Caco-2 (cell line): ENCODE measurements at regions of chr11 and their contacts with region 1.

Region 1: DNA sequence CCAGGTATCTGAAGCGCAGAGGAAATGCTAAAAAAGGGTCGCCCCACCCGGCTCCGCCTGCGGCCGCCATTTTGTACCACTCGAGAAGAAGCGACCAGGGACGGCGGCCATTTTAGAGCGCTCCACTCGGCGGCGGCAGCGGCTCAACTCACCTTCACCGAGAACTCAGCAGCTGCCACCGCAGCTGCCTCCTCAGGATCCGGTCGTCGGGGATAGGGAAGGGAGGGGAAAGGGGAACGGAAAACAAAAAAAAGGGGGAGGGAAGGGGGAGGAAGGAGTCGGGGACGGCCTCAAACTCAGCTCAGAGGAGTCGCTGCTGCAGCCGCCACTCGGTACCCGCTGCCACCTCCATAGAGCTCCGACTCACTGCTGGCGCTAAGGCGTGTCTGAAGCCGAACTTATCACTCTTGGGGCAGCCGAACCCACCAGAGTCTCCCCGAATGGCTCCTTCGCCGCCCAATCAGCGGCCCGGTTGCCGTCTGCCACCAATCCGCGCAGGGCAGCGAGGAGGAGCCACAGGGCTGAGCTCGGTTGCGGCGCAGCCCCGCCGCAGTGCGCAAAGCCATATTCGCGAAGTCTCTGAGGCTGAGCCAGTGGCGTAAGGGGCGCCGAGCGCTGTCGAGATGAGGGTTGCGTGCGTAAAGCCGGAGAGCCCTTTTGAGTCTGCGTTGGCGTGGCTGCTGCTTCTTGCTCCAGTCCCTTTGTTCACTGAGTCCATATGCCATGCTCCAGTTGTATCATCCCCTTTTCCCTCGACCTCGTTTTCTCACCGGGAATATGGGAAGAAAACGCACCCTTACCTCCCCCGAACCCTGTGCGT is at the start of gene EIF4G2:
- DNase-seq: peak; percentile 98 to 99
- H3K4me3 ChIP-seq: peak within 1 kb of the TSS; percentile 92
- H3K4me3 Mint-ChIP-seq: peak within 1 kb of the TSS; percentile 98
- H3K27ac Mint-ChIP-seq: peak within 1 kb of the TSS; percentile 97
- H3K4me1 ChIP-seq: peaks cover 11% of the 10 kb centered on the region
- H3K4me1 Mint-ChIP-seq: peaks cover 11% of the 10 kb centered on the region
- H3K27me3 ChIP-seq: no peaks in the 10 kb centered on the region
- H3K27me3 Mint-ChIP-seq: no peaks in the 10 kb centered on the region
- CTCF ChIP-seq: no peak
- total RNA-seq, gene EIF4G2: 1,233 and 1,287 TPM in 2 replicates

Region 2: GRCh38 chr11:10792398-10792975 is 16.3 kb before region 1 on chr11:
- CTCF ChIA-PET with region 1: interaction called, 28 read pairs
- POLR2A ChIA-PET with region 1: interaction called, 49 read pairs
- intact Hi-C with region 1: no loop called
- DNase-seq: peak; percentile 93 to 96
- H3K4me3 ChIP-seq: no peak overlapping the region
- H3K4me3 Mint-ChIP-seq: peak overlapping the region; percentile 10
- H3K27ac Mint-ChIP-seq: no peak overlapping the region
- H3K4me1 ChIP-seq: no peaks in the 10 kb centered on the region
- H3K4me1 Mint-ChIP-seq: peaks cover 6% of the 10 kb centered on the region
- H3K27me3 ChIP-seq: no peaks in the 10 kb centered on the region
- H3K27me3 Mint-ChIP-seq: no peaks in the 10 kb centered on the region
- CTCF ChIP-seq: peak; percentile 94 to 99

Region 3: GRCh38 chr11:10838083-10838482 is 29.3 kb after region 1 on chr11:
- CTCF ChIA-PET with region 1: interaction called, 7 read pairs
- POLR2A ChIA-PET with region 1: interaction called, 32 read pairs
- intact Hi-C with region 1: loop called (anchors 1 kb)
- DNase-seq: no peak
- H3K4me3 ChIP-seq: no peak overlapping the region
- H3K4me3 Mint-ChIP-seq: no peak overlapping the region
- H3K27ac Mint-ChIP-seq: no peak overlapping the region
- H3K4me1 ChIP-seq: peaks cover 20% of the 10 kb centered on the region
- H3K4me1 Mint-ChIP-seq: peaks cover 11% of the 10 kb centered on the region
- H3K27me3 ChIP-seq: no peaks in the 10 kb centered on the region
- H3K27me3 Mint-ChIP-seq: no peaks in the 10 kb centered on the region
- CTCF ChIP-seq: no peak

Region 4: GRCh38 chr11:10893714-10894151 is 85.0 kb after region 1 on chr11:
- CTCF ChIA-PET with region 1: interaction called, 11 read pairs
- POLR2A ChIA-PET with region 1: interaction called, 35 read pairs
- intact Hi-C with region 1: loop called (anchors 2 kb)
- DNase-seq: peak; percentile 63 to 78
- H3K4me3 ChIP-seq: no peak overlapping the region
- H3K4me3 Mint-ChIP-seq: no peak overlapping the region
- H3K27ac Mint-ChIP-seq: peak overlapping the region; percentile 77
- H3K4me1 ChIP-seq: peaks cover 32% of the 10 kb centered on the region
- H3K4me1 Mint-ChIP-seq: peaks cover 32% of the 10 kb centered on the region
- H3K27me3 ChIP-seq: no peaks in the 10 kb centered on the region
- H3K27me3 Mint-ChIP-seq: no peaks in the 10 kb centered on the region
- CTCF ChIP-seq: peak; percentile 21 to 52

Region 5: DNA sequence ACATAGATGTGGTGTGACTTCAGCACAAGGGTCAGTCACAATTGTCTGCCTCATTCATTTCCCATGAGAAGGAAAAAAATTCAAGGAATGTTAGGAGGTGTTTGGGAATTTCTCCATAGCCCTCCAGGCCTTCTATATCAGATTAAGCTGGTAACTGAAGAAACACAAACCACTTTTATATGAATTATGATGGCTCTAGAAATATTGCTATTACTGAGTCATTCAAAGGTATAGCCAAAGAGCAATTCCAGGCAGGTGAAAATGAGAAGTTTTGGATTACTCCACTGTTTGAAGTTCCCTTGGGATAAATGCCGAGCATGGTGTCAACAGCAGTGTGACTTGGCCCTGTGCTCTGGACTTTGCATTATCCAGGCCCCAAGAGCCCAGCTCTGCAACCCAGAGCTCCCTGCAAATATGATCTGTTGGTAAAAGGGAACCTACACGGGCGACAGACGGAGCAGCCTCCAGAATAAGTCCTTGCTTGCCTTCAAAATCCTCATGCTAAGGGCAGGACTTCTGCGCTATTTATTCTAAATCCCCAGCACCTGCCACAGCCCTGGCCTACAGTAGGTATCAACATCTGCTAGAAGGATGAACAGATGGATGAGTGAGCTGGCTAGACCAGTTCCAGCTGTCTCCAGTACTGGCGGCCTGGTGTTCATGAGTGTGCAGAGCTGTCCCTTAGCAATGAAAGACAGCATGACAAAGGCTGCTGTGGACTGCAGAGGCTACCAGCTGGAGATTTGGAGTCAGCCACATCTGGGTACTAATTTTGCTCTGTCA is 116.6 kb after region 1 on chr11:
- CTCF ChIA-PET with region 1: interaction called, 3 read pairs
- POLR2A ChIA-PET with region 1: interaction called, 39 read pairs
- intact Hi-C with region 1: loop called (anchors 2 kb)
- DNase-seq: peak; percentile 39 to 60
- H3K4me3 ChIP-seq: no peak overlapping the region
- H3K4me3 Mint-ChIP-seq: no peak overlapping the region
- H3K27ac Mint-ChIP-seq: peak overlapping the region; percentile 35
- H3K4me1 ChIP-seq: peaks cover 35% of the 10 kb centered on the region
- H3K4me1 Mint-ChIP-seq: peaks cover 20% of the 10 kb centered on the region
- H3K27me3 ChIP-seq: no peaks in the 10 kb centered on the region
- H3K27me3 Mint-ChIP-seq: no peaks in the 10 kb centered on the region
- CTCF ChIP-seq: no peak

Region 6: GRCh38 chr11:10955616-10956015 is 146.9 kb after region 1 on chr11:
- CTCF ChIA-PET with region 1: no interaction called
- POLR2A ChIA-PET with region 1: no interaction called
- intact Hi-C with region 1: no loop called
- DNase-seq: no peak
- H3K4me3 ChIP-seq: no peak overlapping the region
- H3K4me3 Mint-ChIP-seq: no peak overlapping the region
- H3K27ac Mint-ChIP-seq: no peak overlapping the region
- H3K4me1 ChIP-seq: no peaks in the 10 kb centered on the region
- H3K4me1 Mint-ChIP-seq: no peaks in the 10 kb centered on the region
- H3K27me3 ChIP-seq: no peaks in the 10 kb centered on the region
- H3K27me3 Mint-ChIP-seq: no peaks in the 10 kb centered on the region
- CTCF ChIP-seq: no peak